Caco-2 (cell line): ENCODE measurements at regions of chr10 and their contacts with region 1.

Region 1: DNA sequence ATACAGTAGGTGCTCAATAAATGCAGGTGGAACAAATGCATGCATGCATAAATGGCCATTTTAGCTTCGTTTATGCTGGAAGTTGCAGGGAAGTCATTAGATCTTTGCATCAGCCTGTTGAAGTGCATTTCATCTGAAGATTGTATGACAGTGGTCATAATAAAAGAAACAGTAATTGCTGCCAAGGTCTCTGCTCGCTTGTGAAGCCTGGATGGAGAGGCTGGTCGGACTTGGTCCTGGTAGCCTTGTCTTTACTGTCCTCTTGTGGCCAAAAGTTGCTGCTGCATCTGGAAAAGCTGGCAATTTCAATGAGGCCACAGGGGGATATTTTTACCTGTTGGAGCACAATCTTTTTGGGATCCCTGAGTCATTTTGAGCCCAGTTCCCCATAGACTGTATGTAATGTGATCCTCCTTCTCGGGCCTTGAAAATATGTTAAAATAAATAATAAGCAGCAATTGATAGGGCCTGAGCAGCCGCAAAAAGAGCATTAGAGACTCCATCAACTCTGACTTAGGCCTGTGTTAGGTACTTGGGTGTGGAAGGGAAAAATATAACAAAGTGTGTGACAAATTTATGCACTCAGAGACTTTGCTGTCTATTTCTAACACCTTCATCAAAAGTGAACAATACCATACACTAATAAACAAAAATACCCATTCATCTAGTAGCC is 31.6 kb upstream of the HABP2 start:
- DNase-seq: peak; percentile 65 to 78
- H3K4me3 ChIP-seq: no peak overlapping the region
- H3K4me3 Mint-ChIP-seq: no peak overlapping the region
- H3K27ac Mint-ChIP-seq: no peak overlapping the region
- H3K4me1 ChIP-seq: no peaks in the 10 kb centered on the region
- H3K4me1 Mint-ChIP-seq: no peaks in the 10 kb centered on the region
- H3K27me3 ChIP-seq: no peaks in the 10 kb centered on the region
- H3K27me3 Mint-ChIP-seq: no peaks in the 10 kb centered on the region
- CTCF ChIP-seq: peak; percentile 89 to 99

Region 2: DNA sequence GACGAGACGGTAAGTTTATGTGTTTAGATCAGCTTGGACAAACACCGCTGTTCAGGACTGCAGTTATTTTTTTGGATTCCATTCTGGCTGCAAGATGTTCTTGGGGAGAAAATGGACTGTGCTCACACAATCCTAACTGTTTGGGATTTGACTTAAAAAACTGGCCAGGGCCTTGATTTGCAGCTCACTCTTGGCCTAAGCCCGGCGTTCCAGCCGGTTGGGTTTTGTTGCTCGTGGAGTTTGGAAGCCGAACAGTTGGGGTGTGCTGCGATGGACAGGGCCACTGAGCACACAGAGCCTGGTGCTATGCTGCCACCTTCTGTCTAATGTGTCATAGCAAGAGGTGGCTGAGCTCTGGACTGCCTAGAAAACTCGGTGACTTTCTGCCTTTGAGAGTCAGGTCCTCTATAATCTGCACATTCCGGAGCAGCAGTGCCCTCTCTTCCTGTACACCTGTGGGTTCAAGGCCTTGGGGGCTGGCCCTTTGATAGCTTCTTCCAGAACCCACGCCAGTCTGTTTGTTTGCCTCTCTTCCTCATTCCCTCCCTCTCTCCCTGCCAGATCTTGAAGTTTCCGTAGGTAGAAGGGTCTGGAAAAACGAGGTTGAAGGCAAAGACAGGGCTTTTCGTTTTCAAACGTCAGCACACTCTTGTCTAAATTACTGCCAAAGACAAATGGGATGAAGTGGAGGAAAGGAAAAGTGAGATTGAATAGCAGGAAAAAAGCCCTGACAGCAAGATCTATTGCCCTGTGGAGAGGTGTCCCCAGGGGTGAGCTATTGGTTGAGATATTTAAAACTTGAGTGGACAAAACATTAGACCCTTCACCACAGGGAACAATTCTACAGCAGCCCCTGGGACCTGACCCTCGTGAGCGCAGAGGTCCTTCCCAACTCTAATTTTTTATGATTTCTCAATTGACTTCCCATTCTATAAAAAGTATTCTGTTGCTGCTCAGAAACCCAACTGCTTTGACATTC is 135.9 kb before region 1 on chr10:
- CTCF ChIA-PET with region 1: interaction called, 3 read pairs
- POLR2A ChIA-PET with region 1: no interaction called
- intact Hi-C with region 1: loop called (anchors 1 kb)
- DNase-seq: peak; percentile 80
- H3K4me3 ChIP-seq: no peak overlapping the region
- H3K4me3 Mint-ChIP-seq: no peak overlapping the region
- H3K27ac Mint-ChIP-seq: no peak overlapping the region
- H3K4me1 ChIP-seq: no peaks in the 10 kb centered on the region
- H3K4me1 Mint-ChIP-seq: peaks cover 6% of the 10 kb centered on the region
- H3K27me3 ChIP-seq: no peaks in the 10 kb centered on the region
- H3K27me3 Mint-ChIP-seq: peaks cover 3% of the 10 kb centered on the region
- CTCF ChIP-seq: peak; percentile 84 to 93

Region 3: DNA sequence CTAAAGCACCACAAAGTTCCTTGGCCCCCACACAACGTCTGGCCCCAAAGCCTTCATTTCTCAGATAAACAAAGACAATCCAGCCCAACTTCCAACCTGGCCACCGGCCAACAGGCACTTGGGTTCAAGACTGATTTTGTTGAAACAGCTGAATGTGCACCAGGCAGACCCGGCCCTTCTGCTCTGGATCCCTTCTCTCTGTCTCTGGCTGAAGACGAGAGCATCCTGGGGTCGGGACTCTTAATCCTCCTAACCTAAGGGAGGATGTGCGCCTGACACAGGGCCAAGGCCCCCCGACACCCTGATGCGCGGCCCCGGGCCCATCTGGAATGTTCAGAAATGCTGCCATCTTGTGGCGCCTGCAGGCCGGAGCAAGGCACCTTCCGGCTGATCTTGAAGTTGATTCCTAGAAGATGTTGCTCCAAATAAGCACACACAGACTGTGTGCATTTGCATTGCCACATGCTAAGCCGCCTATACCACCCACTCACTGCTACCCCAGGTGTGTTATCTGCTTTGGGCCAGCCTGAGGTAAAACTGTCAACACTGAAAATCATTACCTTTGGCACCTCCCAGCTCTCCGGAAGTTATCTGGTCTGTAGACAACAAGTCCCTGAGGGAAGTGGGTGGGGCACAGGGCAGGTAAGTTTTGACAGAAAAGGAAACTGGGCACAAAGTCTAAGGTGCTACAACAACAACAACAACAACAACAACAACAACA is 66.8 kb before region 1 on chr10:
- CTCF ChIA-PET with region 1: interaction called, 3 read pairs
- POLR2A ChIA-PET with region 1: no interaction called
- intact Hi-C with region 1: loop called (anchors 1 kb)
- DNase-seq: peak; percentile 53 to 58
- H3K4me3 ChIP-seq: no peak overlapping the region
- H3K4me3 Mint-ChIP-seq: no peak overlapping the region
- H3K27ac Mint-ChIP-seq: no peak overlapping the region
- H3K4me1 ChIP-seq: peaks cover 12% of the 10 kb centered on the region
- H3K4me1 Mint-ChIP-seq: no peaks in the 10 kb centered on the region
- H3K27me3 ChIP-seq: no peaks in the 10 kb centered on the region
- H3K27me3 Mint-ChIP-seq: peaks cover 3% of the 10 kb centered on the region
- CTCF ChIP-seq: peak; percentile 73 to 76

Region 4: DNA sequence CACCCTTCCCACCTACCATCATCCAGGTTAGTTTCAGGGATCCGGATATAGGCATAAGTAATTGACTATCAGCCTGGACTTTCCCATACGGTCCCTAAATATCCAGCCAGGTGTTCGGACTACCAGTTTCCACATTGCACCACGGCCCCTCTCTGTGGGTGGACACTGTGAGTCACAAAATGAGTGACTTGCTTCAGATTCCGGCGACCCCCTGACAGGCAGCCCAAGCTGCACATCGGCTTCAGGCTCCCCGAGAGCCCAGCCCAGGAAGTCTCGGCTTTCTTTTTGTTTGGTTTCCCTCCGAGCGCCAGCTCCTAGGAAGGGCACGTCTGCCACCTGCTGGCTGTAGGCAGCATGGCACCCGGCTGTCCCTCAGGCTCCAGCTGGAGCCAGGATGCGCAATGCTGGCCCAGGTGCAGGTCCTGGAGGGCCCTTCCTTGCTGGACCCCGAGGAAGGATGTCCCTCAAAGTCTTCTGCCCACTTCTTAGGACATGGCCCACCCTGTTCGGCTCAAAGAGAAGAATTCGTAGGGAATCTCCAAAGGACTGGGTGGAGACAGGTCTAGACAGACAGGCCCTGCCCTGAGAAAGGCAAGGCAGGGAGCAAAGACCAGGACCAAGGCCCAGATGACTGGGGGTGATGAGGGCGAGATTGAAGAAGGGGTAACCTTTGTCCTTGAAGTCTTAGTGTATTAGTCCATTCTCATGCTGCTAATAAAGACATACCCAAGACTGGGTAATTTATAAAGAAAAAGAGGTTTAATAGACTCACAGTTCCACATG is 42.2 kb after region 1 on chr10:
- CTCF ChIA-PET with region 1: interaction called, 11 read pairs
- POLR2A ChIA-PET with region 1: no interaction called
- intact Hi-C with region 1: loop called (anchors 1 kb)
- DNase-seq: peak; percentile 72 to 87
- H3K4me3 ChIP-seq: peak overlapping the region; percentile 31
- H3K4me3 Mint-ChIP-seq: peak overlapping the region; percentile 80
- H3K27ac Mint-ChIP-seq: peak overlapping the region; percentile 85
- H3K4me1 ChIP-seq: peaks cover 40% of the 10 kb centered on the region
- H3K4me1 Mint-ChIP-seq: peaks cover 46% of the 10 kb centered on the region
- H3K27me3 ChIP-seq: no peaks in the 10 kb centered on the region
- H3K27me3 Mint-ChIP-seq: no peaks in the 10 kb centered on the region
- CTCF ChIP-seq: peak; percentile 98